Dendritic cell treated with granulocyte-macrophage colony-stimulating factor and Interleukin-4, amounts not matched to agents 40 ng/mL and 50 ng/mL, for 4 days (primary cell): ENCODE measurements at regions of chr5 and their contacts with region 1.

Region 1: DNA sequence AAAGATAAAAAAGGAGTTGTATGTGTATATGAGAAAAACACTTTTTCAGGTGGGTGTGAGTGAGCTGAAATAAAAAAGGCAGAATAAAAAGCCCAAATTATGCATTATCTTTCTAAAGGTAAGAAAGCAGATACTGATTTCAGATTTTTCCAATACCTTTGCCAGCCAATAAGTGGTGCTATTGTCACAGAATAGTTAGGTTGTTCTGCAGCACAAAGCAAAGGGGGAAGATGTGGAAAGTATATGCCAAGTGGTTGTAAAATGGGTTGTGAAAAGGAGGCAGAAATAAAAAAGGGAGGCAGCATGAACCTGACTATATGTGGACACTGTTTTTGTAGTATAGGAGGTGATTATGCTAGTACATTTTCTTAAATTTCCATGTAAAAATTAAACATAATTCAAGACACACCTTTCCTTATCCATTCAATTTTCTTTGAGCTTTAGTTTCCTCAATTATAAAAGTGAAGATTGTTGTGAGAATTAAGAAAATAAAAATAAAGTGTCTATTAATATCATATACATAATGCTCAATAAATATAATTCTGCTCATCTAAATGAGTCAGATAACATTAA is 106.7 kb downstream of the SMIM15 start:
- H3K4me3 Mint-ChIP-seq: no peak overlapping the region
- H3K27ac Mint-ChIP-seq: no peak overlapping the region
- H3K4me1 Mint-ChIP-seq: no peaks in the 10 kb centered on the region
- H3K27me3 Mint-ChIP-seq: no peaks in the 10 kb centered on the region

Region 2: GRCh38 chr5:61162010-61162831 is 106.7 kb after region 1 on chr5 and contains the start of gene SMIM15:
- intact Hi-C with region 1: no loop called
- H3K4me3 Mint-ChIP-seq: peak within 1 kb of the TSS; percentile 84
- H3K27ac Mint-ChIP-seq: peak within 1 kb of the TSS; percentile 97
- H3K4me1 Mint-ChIP-seq: peaks cover 45% of the 10 kb centered on the region
- H3K27me3 Mint-ChIP-seq: no peaks in the 10 kb centered on the region

Region 3: GRCh38 chr5:61301341-61302199 is 246.1 kb after region 1 on chr5:
- intact Hi-C with region 1: no loop called
- H3K4me3 Mint-ChIP-seq: no peak overlapping the region
- H3K27ac Mint-ChIP-seq: no peak overlapping the region
- H3K4me1 Mint-ChIP-seq: peaks cover 27% of the 10 kb centered on the region
- H3K27me3 Mint-ChIP-seq: no peaks in the 10 kb centered on the region

Region 4: DNA sequence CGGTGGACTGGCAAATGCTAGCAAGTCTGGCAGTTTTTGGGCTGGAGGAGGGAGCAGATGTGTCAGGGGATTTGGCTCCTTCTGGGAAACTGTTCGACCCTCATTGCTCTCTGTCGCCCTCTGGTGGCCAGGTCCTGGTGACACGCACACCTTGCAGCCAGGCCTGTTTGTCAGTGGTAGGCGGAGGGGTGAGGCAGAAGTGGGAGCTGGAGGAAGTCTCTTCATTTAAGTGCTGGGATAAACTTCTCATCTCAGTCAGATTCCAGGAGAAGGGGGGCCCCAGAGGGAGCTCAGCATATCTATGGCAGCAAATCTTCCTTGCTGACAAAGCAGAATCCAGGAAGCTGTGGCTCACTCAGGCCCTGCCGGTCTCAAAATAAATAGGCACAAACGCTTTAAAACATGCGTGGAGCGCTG is 603.1 kb after region 1 on chr5:
- intact Hi-C with region 1: loop called (anchors 1 kb)
- H3K4me3 Mint-ChIP-seq: no peak overlapping the region
- H3K27ac Mint-ChIP-seq: no peak overlapping the region
- H3K4me1 Mint-ChIP-seq: peaks cover 5% of the 10 kb centered on the region
- H3K27me3 Mint-ChIP-seq: peaks cover 18% of the 10 kb centered on the region

Region 5: GRCh38 chr5:61817472-61818326 is 762.2 kb after region 1 on chr5:
- intact Hi-C with region 1: loop called (anchors 2 kb)
- H3K4me3 Mint-ChIP-seq: no peak overlapping the region
- H3K27ac Mint-ChIP-seq: no peak overlapping the region
- H3K4me1 Mint-ChIP-seq: no peaks in the 10 kb centered on the region
- H3K27me3 Mint-ChIP-seq: peaks cover 1% of the 10 kb centered on the region

Region 6: DNA sequence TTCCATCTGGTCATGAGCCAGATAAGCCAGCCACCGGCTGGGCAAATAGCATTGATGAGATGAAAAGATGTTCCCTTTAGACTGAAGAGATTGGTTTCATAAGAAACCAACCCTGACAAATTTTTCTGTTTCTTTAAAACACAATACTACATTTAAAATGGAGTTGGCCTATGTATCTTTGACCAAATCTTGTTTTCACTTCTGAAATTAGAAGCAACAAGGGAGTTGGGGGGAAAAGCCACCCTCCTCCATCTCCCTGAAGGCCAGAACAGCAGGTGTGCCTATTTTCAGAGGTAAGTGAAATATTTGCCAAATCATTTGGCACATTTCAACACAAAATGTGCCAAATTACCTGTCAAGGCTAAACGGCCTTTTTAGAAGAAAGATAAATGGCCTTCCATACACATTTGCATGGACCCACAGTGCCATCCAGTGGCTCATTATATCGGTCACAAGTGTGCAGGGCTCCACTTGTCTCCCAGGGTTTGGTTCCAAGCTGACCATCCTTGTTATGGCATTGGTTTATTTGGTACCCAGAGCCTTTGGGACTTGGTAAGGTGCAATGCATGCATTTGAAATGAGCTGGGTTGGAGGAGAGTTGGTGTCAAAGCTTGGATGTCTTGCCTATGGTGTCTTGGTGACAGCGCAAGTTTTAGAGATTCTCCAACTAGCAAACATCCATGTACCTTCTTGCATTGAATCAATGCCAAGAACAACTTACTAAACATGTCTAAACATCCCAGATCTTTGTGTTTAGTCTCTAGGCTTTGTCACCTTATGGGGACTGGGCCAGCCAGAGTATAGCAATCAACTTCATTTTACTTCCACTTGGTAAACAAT is 878.5 kb after region 1 on chr5:
- intact Hi-C with region 1: loop called (anchors 10 kb)
- H3K4me3 Mint-ChIP-seq: no peak overlapping the region
- H3K27ac Mint-ChIP-seq: no peak overlapping the region
- H3K4me1 Mint-ChIP-seq: no peaks in the 10 kb centered on the region
- H3K27me3 Mint-ChIP-seq: no peaks in the 10 kb centered on the region

Region 7: DNA sequence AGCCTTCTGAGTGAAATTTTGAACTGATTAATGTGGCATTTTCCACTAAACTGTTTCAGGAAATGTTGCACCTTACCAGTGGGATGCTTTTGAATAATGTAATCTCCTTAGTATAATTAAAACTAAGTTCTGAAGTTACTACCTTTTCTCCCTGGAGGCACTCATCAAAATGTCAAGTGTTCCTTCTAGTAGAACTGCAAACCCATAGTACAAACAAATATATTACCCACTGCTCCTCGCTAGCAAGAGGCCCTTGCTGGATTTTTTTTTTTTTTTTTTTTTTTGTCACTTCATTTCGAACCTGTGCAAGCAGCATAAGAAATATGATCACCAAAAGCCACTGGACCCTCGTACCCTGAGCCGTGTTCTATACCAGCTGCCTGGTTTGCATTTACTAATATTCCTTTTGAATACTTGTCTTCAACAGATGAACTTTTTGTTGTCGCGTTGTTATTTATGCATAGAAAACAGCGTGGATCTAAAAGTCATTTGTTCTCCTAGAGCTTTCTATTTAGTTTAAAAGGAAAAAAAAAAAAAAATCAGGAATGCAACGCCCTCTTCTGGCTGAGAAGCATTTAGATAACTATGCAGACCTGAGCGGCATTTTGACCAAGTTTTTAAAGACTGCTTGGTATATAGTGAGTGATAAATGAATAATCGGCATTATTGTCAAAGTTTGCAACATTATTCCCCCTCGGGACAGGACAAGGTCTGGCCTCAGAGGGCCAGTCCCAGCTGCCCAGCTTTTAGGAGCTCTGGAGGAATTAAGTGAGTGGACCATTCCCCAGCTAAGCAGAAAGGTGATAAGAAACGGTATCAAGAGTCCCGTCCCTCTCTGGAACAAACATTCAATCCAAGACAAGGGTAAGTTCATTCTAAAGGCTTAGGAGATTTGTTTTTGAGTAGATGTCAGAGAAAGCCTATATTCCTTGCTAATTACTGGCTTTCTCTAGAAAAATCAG is 1088.0 kb after region 1 on chr5:
- intact Hi-C with region 1: loop called (anchors 5 kb)
- H3K4me3 Mint-ChIP-seq: no peak overlapping the region
- H3K27ac Mint-ChIP-seq: no peak overlapping the region
- H3K4me1 Mint-ChIP-seq: no peaks in the 10 kb centered on the region
- H3K27me3 Mint-ChIP-seq: peaks cover 7% of the 10 kb centered on the region